Ovary (tissue), 10 donors: ENCODE measurements at regions of chr12 and their contacts with region 1.

Region 1: GRCh38 chr12:54214553-54215406 is 26.0 kb upstream of the SMUG1 start:
- DNase-seq: peak; percentile 83 to 90 (median 86)
- H3K4me3 ChIP-seq: no peak overlapping the region
- H3K27ac ChIP-seq: no peak overlapping the region
- H3K4me1 ChIP-seq: peaks cover 4% of the 10 kb centered on the region
- H3K27me3 ChIP-seq: no peaks in the 10 kb centered on the region
- CTCF ChIP-seq: peak; percentile 76 to 89 (median 86)
- EP300 ChIP-seq: no peak
- POLR2A ChIP-seq: no peak

Region 2: GRCh38 chr12:53701518-53702260 is 513.1 kb before region 1 on chr12:
- intact Hi-C with region 1: loop called in 1 of 4 experiments (anchors 10 kb)
- DNase-seq: peak; percentile 69 to 90 (median 84)
- H3K4me3 ChIP-seq: no peak overlapping the region
- H3K27ac ChIP-seq: no peak overlapping the region
- H3K4me1 ChIP-seq: no peaks in the 10 kb centered on the region
- H3K27me3 ChIP-seq: no peaks in the 10 kb centered on the region
- CTCF ChIP-seq: peak; percentile 53 to 82 (median 72)
- EP300 ChIP-seq: no peak
- POLR2A ChIP-seq: no peak